Esophagus muscularis mucosa (tissue), 4 donors: ENCODE measurements at regions of chr5 and their contacts with region 1.

Region 1: DNA sequence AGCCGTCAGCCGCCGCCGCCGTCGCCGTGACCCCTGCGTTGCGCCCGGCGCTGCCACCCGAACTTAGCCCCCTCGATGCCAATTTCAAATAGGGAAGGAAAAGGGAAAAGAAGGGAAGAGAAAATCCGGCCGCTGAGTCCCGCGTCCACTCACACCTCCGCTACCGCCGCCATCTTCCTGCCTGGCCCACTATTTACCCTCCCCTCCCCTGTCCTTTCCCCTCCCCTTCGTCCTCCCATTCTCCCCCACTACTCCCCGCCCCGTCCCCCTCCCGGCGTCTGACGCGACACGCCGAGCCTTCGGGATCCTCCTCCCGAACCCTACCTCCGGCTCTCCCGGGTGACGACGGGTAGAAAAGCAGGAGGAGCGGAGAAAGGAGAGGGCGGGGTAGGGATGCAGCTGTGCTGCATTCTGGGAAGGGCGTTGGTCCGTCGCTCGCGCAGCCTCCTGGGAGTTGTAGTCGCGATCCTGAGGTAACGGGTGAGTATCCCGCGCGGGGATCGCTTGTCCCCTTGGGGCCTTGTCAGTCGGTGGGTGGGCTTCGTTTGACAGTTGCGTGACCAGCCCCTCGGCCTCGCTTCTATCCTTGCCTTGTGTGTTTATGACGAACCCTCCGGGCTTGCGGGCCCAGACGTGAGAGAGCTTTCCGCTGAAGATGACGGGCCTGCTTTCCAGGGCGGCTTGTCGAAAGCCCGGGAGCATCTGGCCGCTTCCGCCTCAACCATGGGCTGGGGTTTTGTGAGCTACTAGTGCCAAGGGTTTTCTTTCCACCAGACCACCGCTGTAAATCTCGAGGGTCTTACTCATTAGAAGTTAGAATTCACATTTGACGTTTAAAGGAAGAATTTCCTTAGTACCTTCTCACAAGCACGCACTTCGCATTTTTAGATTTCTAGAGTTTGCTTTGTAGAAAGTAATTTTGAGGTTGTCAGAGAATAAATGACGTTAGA is at the starts of genes CERT1 and POLK:
- DNase-seq: peak; percentile 99
- H3K4me3 ChIP-seq: peak within 1 kb of the TSS; percentile 69 to 97 (median 90)
- H3K27ac ChIP-seq: peak within 1 kb of the TSS; percentile 89 to 97 (median 91)
- H3K4me1 ChIP-seq: peaks cover 24 to 55% (median 43%) of the 10 kb centered on the region in 4 donors
- H3K27me3 ChIP-seq: no peaks in the 10 kb centered on the region
- CTCF ChIP-seq: peak in 1 of 3 experiments; percentile 14
- EP300 ChIP-seq: no peak
- POLR2A ChIP-seq: peak; percentile 63
- total RNA-seq, gene CERT1: 28.5 to 45.3 (median 35.8) TPM
- total RNA-seq, gene POLK: 22.6 to 37.0 (median 32.3) TPM

Region 2: GRCh38 chr5:75566710-75567309 is 55.1 kb after region 1 on chr5:
- intact Hi-C with region 1: loop called (anchors 5 kb)
- DNase-seq: no peak
- H3K4me3 ChIP-seq: peak overlapping the region in 1 of 4 donors; percentile 3
- H3K27ac ChIP-seq: peak overlapping the region; percentile 46 to 75 (median 63)
- H3K4me1 ChIP-seq: peaks cover 18 to 28% (median 27%) of the 10 kb centered on the region in 4 donors
- H3K27me3 ChIP-seq: no peaks in the 10 kb centered on the region
- CTCF ChIP-seq: no peak
- EP300 ChIP-seq: no peak
- POLR2A ChIP-seq: no peak